H1 (cell line): ENCODE measurements at regions of chr2 and their contacts with region 1.

Region 1: DNA sequence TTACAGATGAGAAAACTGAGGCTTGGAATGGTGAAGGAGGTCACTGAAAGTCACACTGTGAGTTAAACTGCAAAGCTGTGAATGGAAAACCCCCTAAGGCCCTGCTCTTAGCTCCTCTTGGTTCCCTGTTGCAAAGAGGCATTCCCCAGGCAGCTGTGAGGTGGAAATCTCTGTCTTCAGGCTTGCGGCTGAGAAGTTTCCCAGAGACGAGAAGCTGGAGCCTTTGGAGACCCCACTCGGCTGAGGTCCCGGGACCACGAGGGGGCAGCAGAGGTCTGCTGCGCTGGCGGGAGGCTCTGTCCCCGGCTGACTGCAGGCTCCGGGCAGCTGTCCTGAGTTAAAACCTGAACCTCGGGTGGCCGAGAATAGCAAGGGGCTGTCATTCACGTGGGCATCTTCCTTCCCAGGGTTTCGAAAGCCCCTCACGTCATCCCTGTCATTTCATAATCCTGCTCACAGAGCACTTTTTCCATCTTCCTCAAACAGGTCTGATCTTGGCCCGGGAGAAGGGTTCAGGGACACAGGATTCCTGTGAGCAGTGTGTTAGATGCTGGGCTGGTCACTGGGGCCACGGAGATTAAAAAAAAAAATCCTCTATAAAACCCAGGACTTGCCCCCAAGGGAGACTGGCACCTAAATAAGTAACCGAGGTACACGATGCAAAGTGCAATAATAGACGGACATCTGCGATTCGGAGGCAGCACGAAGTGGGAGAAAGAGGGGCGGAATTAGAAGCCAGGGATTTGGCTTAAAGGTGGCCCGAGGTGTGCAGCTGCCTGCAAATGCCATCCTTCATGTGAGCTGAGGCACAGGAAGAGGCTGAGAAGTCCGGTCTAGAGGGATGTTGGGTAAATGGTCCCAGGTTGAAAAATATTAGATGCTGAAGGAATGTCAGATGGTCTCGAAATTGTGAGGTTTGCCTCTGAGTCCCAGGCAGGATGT is 24.6 kb upstream of the ATOH8 start:
- DNase-seq: peak; percentile 71 to 95
- H3K4me3 ChIP-seq: no peak overlapping the region
- H3K27ac ChIP-seq: no peak overlapping the region
- H3K4me1 ChIP-seq: no peaks in the 10 kb centered on the region
- H3K27me3 ChIP-seq: no peaks in the 10 kb centered on the region
- CTCF ChIP-seq: peak; percentile 84 to 98 (median 95)
- EP300 ChIP-seq: no peak
- POLR2A ChIP-seq: no peak
- RAD21 ChIP-seq: peak; percentile 99 to 100

Region 2: DNA sequence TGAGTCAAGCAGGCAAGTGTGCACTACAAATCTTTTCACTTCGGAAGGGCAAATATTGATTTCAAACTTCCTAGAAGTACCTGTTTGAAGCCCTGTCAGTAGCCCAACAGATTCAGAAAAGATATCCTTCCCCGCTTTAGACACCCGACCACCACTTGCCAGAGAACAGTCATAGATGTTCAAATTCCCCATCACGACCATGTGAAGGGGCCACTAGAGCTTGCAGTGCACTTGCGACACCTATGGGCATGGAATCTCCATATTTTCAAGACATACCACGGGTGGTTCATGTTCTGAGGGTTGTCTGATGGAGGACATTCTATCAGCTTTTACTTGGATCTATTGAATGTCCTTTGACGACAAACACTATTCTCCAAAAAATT is 11.2 kb before region 1 on chr2:
- CTCF ChIA-PET with region 1: interaction called, 26 read pairs
- POLR2A ChIA-PET with region 1: no interaction called
- DNase-seq: no peak
- H3K4me3 ChIP-seq: no peak overlapping the region
- H3K27ac ChIP-seq: no peak overlapping the region
- H3K4me1 ChIP-seq: no peaks in the 10 kb centered on the region
- H3K27me3 ChIP-seq: no peaks in the 10 kb centered on the region; a peak in 1 of 7 replicates
- CTCF ChIP-seq: no peak
- EP300 ChIP-seq: no peak
- POLR2A ChIP-seq: no peak
- RAD21 ChIP-seq: peak in 1 of 2 experiments; percentile 23; a peak in 2 of 4 replicates

Region 3: GRCh38 chr2:85750587-85751575 is 21.7 kb after region 1 on chr2:
- CTCF ChIA-PET with region 1: interaction called, 986 read pairs
- POLR2A ChIA-PET with region 1: no interaction called
- DNase-seq: peak; percentile 25 to 83
- H3K4me3 ChIP-seq: no peak overlapping the region
- H3K27ac ChIP-seq: no peak overlapping the region
- H3K4me1 ChIP-seq: peaks cover 0 to 10% (median 8%) of the 10 kb centered on the region in 4 experiments; a peak in 5 of 7 replicates
- H3K27me3 ChIP-seq: peaks cover 39 to 57% (median 49%) of the 10 kb centered on the region in 4 experiments
- CTCF ChIP-seq: peak in 2 of 3 experiments; percentile 91 to 93; a peak in 3 of 4 replicates
- EP300 ChIP-seq: no peak
- POLR2A ChIP-seq: no peak
- RAD21 ChIP-seq: peak; percentile 81 to 91

Region 4: GRCh38 chr2:85777441-85777861 is 48.3 kb after region 1 on chr2:
- CTCF ChIA-PET with region 1: interaction called, 986 read pairs
- POLR2A ChIA-PET with region 1: no interaction called
- DNase-seq: no peak
- H3K4me3 ChIP-seq: no peak overlapping the region
- H3K27ac ChIP-seq: no peak overlapping the region
- H3K4me1 ChIP-seq: peaks cover 0 to 5% (median 3%) of the 10 kb centered on the region in 4 experiments; a peak in 6 of 7 replicates
- H3K27me3 ChIP-seq: peaks cover 0 to 6% (median 5%) of the 10 kb centered on the region in 4 experiments; a peak in 4 of 7 replicates
- CTCF ChIP-seq: no peak
- EP300 ChIP-seq: no peak
- POLR2A ChIP-seq: no peak
- RAD21 ChIP-seq: no peak

Region 5: GRCh38 chr2:85797921-85798320 is 68.8 kb after region 1 on chr2:
- CTCF ChIA-PET with region 1: interaction called, 986 read pairs
- POLR2A ChIA-PET with region 1: no interaction called
- DNase-seq: no peak
- H3K4me3 ChIP-seq: no peak overlapping the region
- H3K27ac ChIP-seq: no peak overlapping the region
- H3K4me1 ChIP-seq: no peaks in the 10 kb centered on the region; a peak in 1 of 7 replicates
- H3K27me3 ChIP-seq: peaks cover 0 to 2% (median 0%) of the 10 kb centered on the region in 4 experiments; a peak in 2 of 7 replicates
- CTCF ChIP-seq: peak in 2 of 3 experiments; percentile 58 to 74; a peak in 3 of 4 replicates
- EP300 ChIP-seq: no peak
- POLR2A ChIP-seq: no peak
- RAD21 ChIP-seq: peak; percentile 71 to 82

Region 6: GRCh38 chr2:85813982-85814801 is 85.0 kb after region 1 on chr2:
- CTCF ChIA-PET with region 1: interaction called, 97 read pairs
- POLR2A ChIA-PET with region 1: no interaction called
- DNase-seq: peak; percentile 81 to 97
- H3K4me3 ChIP-seq: no peak overlapping the region
- H3K27ac ChIP-seq: no peak overlapping the region
- H3K4me1 ChIP-seq: no peaks in the 10 kb centered on the region; a peak in 4 of 7 replicates
- H3K27me3 ChIP-seq: no peaks in the 10 kb centered on the region; a peak in 1 of 7 replicates
- CTCF ChIP-seq: peak; percentile 95 to 99 (median 99)
- EP300 ChIP-seq: no peak
- POLR2A ChIP-seq: no peak
- RAD21 ChIP-seq: peak; percentile 97 to 98

Region 7: GRCh38 chr2:85976106-85976920 is 247.2 kb after region 1 on chr2:
- CTCF ChIA-PET with region 1: no interaction called
- POLR2A ChIA-PET with region 1: no interaction called
- DNase-seq: peak in 1 of 2 experiments; percentile 14
- H3K4me3 ChIP-seq: no peak overlapping the region
- H3K27ac ChIP-seq: no peak overlapping the region
- H3K4me1 ChIP-seq: no peaks in the 10 kb centered on the region
- H3K27me3 ChIP-seq: no peaks in the 10 kb centered on the region
- CTCF ChIP-seq: no peak
- EP300 ChIP-seq: no peak
- POLR2A ChIP-seq: no peak
- RAD21 ChIP-seq: no peak